OCI-LY7 (cell line): ENCODE measurements at regions of chr20 and their contacts with region 1.

Region 1: GRCh38 chr20:17682103-17682888 is at the start of gene RRBP1:
- DNase-seq: peak; percentile 97
- H3K4me3 ChIP-seq: peak within 1 kb of the TSS; percentile 74
- H3K27ac ChIP-seq: peak within 1 kb of the TSS; percentile 50
- H3K4me1 ChIP-seq: peaks cover 15% of the 10 kb centered on the region
- CTCF ChIP-seq: peak; percentile 97
- total RNA-seq, gene RRBP1: 13.6 and 16.8 TPM in 2 replicates

Region 2: GRCh38 chr20:17491041-17491440 is 191.3 kb before region 1 on chr20:
- CTCF ChIA-PET with region 1: no interaction called
- POLR2A ChIA-PET with region 1: no interaction called
- intact Hi-C with region 1: no loop called
- DNase-seq: no peak
- H3K4me3 ChIP-seq: no peak overlapping the region
- H3K27ac ChIP-seq: no peak overlapping the region
- H3K4me1 ChIP-seq: no peaks in the 10 kb centered on the region
- CTCF ChIP-seq: no peak

Region 3: GRCh38 chr20:17845701-17846475 is 163.6 kb after region 1 on chr20:
- CTCF ChIA-PET with region 1: interaction called, 3 read pairs
- POLR2A ChIA-PET with region 1: interaction called, 5 read pairs
- intact Hi-C with region 1: loop called (anchors 1 kb)
- DNase-seq: no peak
- H3K4me3 ChIP-seq: no peak overlapping the region
- H3K27ac ChIP-seq: no peak overlapping the region
- H3K4me1 ChIP-seq: peaks cover 62% of the 10 kb centered on the region
- CTCF ChIP-seq: no peak

Region 4: GRCh38 chr20:17856024-17856564 is 173.8 kb after region 1 on chr20:
- CTCF ChIA-PET with region 1: interaction called, 3 read pairs
- POLR2A ChIA-PET with region 1: interaction called, 3 read pairs
- intact Hi-C with region 1: loop called (anchors 1 kb)
- DNase-seq: peak; percentile 93
- H3K4me3 ChIP-seq: no peak overlapping the region
- H3K27ac ChIP-seq: peak overlapping the region; percentile 66
- H3K4me1 ChIP-seq: peaks cover 56% of the 10 kb centered on the region
- CTCF ChIP-seq: no peak

Region 5: GRCh38 chr20:17898548-17898994 is 216.3 kb after region 1 on chr20:
- CTCF ChIA-PET with region 1: interaction called, 6 read pairs
- POLR2A ChIA-PET with region 1: interaction called, 4 read pairs
- intact Hi-C with region 1: loop called (anchors 1 kb)
- DNase-seq: peak; percentile 80
- H3K4me3 ChIP-seq: no peak overlapping the region
- H3K27ac ChIP-seq: no peak overlapping the region
- H3K4me1 ChIP-seq: peaks cover 26% of the 10 kb centered on the region
- CTCF ChIP-seq: peak; percentile 98

Region 6: DNA sequence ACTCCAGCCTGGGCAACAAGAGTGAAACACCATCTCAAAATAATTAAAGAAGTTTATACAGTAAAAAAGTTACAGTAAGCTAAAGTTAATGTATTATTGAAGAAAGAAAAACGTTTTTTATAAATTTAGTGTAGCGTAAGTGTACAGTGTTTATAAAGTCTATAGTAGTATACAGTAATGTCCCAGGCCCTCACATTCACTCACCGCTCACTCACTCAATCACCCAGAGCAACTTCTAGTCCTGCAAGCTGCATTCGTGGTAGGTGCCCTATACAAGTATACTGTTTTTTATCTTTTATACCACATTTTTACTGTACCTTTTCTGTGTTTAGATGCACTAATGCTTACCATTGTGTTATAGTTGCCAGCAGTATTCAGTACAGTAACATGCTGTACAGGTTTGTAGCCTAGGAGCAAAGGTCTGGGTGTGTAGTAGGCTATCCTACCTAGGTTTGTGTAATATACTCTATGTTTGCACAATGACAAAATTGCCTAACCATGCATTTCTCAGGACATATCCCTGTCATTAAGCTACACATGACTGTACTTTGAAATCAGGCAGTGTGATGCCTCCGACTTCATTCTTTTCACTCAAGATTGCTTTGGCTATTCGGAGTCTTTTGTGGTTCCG is 303.2 kb after region 1 on chr20:
- CTCF ChIA-PET with region 1: interaction called, 17 read pairs
- POLR2A ChIA-PET with region 1: interaction called, 3 read pairs
- intact Hi-C with region 1: no loop called
- DNase-seq: no peak
- H3K4me3 ChIP-seq: no peak overlapping the region
- H3K27ac ChIP-seq: no peak overlapping the region
- H3K4me1 ChIP-seq: no peaks in the 10 kb centered on the region
- CTCF ChIP-seq: no peak

Region 7: DNA sequence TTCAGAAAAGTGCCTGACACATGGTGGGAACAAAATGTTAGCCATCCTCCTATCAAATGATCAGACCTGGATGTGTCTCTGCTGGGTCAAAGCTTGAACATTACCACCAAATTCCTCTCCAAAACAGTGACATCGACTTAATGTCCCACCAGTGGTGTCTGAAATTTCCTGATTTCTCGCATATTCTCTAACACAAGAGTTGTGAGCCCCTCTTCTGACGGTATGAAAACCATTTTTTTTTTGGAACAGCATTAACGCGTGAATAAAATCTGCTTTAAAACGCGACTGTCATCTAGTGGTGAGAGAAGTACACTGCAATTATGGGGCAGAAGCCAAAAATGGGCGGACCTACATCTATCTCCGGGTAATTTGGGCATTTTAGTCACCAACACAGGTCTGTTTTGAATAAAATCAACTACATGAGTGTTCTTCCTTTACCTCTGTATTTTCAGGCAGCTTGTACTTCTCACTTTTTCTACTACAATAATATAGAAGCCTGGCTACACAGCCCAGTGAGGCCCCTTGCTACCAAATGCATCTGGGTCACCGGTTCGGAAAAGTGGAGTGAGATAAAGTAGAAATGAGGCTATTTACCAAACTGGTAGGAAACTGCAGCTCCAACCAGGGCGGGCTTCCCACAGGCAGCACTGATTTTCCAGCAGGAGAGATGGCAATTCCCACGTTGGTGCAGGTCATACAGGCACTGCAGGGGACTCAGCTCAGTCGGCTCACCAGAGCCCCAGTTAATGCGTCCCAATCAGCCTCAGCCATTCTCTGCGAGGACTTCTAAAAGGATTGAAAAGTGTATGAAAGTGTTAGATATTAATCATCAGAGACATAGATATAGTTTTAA is 313.9 kb after region 1 on chr20:
- CTCF ChIA-PET with region 1: no interaction called
- POLR2A ChIA-PET with region 1: no interaction called
- intact Hi-C with region 1: loop called (anchors 1 kb)
- DNase-seq: peak; percentile 76
- H3K4me3 ChIP-seq: no peak overlapping the region
- H3K27ac ChIP-seq: no peak overlapping the region
- H3K4me1 ChIP-seq: peaks cover 14% of the 10 kb centered on the region
- CTCF ChIP-seq: peak; percentile 99